Common myeloid progenitor, CD34-positive (primary cell): ENCODE measurements at regions of chr1 and their contacts with region 1.

Region 1: DNA sequence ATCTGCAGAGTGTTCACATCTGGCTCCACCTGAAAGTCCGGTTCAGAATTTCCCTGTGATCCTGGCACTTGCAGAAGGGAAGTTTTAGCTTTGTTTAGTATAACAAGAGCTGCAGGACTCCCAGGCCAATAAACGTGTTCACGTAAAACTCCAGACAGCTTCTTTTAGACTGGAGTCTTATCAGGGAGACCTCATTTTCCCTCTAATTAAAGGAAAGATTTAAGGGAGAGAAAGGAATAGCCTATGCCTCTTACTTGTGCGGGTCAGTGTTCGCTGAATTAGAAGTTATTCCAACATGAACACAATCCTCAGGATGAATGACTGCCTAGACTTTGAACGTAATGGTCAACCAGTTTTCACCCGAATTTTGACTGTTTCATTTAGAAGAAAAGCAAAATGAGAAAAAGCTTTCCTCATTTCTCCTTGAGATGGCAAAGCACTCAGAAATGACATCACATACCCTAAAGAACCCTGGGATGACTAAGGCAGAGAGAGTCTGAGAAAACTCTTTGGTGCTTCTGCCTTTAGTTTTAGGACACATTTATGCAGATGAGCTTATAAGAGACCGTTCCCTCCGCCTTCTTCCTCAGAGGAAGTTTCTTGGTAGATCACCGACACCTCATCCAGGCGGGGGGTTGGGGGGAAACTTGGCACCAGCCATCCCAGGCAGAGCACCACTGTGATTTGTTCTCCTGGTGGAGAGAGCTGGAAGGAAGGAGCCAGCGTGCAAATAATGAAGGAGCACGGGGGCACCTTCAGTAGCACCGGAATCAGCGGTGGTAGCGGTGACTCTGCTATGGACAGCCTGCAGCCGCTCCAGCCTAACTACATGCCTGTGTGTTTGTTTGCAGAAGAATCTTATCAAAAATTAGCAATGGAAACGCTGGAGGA is 202.1 kb upstream of the SGIP1 start:
- DNase-seq: peak; percentile 50 to 76 (median 73)
- H3K4me3 ChIP-seq: peak overlapping the region; percentile 33 to 100 (median 82)
- H3K27ac ChIP-seq: peak overlapping the region; percentile 72 to 74
- H3K4me1 ChIP-seq: peaks cover 55 to 95% (median 74%) of the 10 kb centered on the region in 4 experiments
- H3K27me3 ChIP-seq: no peaks in the 10 kb centered on the region

Region 2: DNA sequence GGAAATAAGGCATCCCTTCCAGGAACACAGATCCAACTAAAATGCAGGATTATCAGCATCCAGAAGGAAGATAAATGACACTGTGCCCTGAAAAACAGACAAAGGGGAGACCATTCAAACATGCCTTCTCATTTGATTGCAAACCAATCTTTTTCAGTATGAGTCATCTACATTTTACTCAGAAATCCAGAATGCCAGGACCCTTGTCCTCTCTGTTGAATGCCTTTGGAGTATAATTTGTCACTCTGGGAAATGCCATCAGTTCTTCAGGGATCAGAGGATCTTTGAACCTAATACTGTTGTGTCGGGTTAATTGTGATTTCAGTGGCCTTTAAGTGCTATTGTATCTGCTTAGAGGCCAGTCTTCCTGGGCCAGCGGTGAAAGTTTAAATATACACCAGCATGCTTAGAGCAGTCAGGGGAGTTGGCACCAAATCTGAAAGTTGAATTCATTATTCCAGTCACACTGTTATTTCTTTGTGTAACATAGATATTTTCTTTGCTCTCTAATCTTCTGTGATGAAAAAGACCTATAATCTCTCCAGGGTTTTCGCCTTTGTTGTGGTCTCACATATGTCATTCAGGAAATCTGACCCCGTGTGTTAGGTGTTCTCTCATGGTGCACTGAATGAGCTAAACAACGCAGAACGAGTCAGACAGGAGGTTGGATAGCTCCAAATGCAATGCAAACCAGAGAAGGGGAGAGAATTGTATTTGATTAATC is 162.8 kb before region 1 on chr1:
- CTCF ChIA-PET with region 1: no interaction called
- POLR2A ChIA-PET with region 1: no interaction called
- DNase-seq: no peak
- H3K4me3 ChIP-seq: no peak overlapping the region
- H3K27ac ChIP-seq: no peak overlapping the region
- H3K4me1 ChIP-seq: no peaks in the 10 kb centered on the region
- H3K27me3 ChIP-seq: no peaks in the 10 kb centered on the region

Region 3: GRCh38 chr1:66242646-66243547 is 89.0 kb before region 1 on chr1:
- CTCF ChIA-PET with region 1: interaction called, 10 read pairs
- POLR2A ChIA-PET with region 1: no interaction called
- DNase-seq: peak; percentile 82 to 87 (median 83)
- H3K4me3 ChIP-seq: no peak overlapping the region
- H3K27ac ChIP-seq: no peak overlapping the region
- H3K4me1 ChIP-seq: peaks cover 3 to 7% (median 6%) of the 10 kb centered on the region in 4 experiments
- H3K27me3 ChIP-seq: no peaks in the 10 kb centered on the region

Region 4: GRCh38 chr1:66253330-66253921 is 78.5 kb before region 1 on chr1:
- CTCF ChIA-PET with region 1: interaction called, 10 read pairs
- POLR2A ChIA-PET with region 1: no interaction called
- DNase-seq: peak; percentile 65 to 73 (median 69)
- H3K4me3 ChIP-seq: no peak overlapping the region
- H3K27ac ChIP-seq: no peak overlapping the region
- H3K4me1 ChIP-seq: peaks cover 0 to 26% (median 14%) of the 10 kb centered on the region in 4 experiments
- H3K27me3 ChIP-seq: no peaks in the 10 kb centered on the region

Region 5: GRCh38 chr1:66276218-66276617 is 55.7 kb before region 1 on chr1:
- CTCF ChIA-PET with region 1: interaction called, 12 read pairs
- POLR2A ChIA-PET with region 1: no interaction called
- DNase-seq: peak; percentile 31 to 81 (median 73)
- H3K4me3 ChIP-seq: peak overlapping the region in 4 of 7 experiments; percentile 2 to 56 (median 34)
- H3K27ac ChIP-seq: no peak overlapping the region
- H3K4me1 ChIP-seq: peaks cover 30 to 67% (median 44%) of the 10 kb centered on the region in 4 experiments
- H3K27me3 ChIP-seq: no peaks in the 10 kb centered on the region

Region 6: DNA sequence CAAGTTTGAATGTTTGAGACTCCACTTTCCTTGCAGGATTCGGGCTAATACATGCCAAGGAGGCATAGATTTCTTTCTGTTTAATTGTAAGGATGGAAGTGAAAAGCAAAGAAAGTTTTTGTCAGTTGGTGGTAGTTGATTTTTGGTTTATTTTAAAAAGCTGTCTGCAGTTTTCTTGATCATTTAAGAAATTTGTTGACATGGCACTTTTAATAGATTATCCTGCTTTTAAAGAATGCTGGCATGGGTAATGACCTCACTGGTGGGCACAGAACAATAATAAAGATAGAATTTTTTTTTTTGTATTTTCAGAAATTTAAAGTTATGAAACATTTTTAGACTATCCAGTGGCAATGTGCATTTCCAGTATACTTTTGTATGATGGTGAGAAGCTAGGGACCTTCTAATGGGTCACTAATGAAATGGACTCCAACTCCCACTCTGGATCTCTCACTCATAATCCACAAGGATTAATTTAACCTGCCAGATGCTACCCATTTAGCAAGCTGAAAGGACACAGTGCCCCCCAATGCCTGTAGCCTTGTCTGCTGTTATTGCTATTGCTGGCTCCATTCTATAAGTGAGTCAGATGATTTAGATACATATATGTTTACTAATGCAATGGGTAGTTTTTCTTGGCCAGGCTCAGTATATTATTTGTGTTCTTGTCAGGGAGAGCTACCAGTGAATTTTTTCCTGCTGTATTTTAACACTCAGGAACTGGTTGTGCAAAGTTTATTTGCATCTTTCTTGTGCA is 11.8 kb after region 1 on chr1:
- CTCF ChIA-PET with region 1: interaction called, 11 read pairs
- POLR2A ChIA-PET with region 1: no interaction called
- DNase-seq: no peak
- H3K4me3 ChIP-seq: no peak overlapping the region
- H3K27ac ChIP-seq: no peak overlapping the region
- H3K4me1 ChIP-seq: peaks cover 15 to 26% (median 22%) of the 10 kb centered on the region in 4 experiments
- H3K27me3 ChIP-seq: no peaks in the 10 kb centered on the region

Region 7: GRCh38 chr1:66350001-66350547 is 18.2 kb after region 1 on chr1:
- CTCF ChIA-PET with region 1: interaction called, 21 read pairs
- POLR2A ChIA-PET with region 1: interaction called, 10 read pairs
- DNase-seq: peak; percentile 60 to 93 (median 87)
- H3K4me3 ChIP-seq: peak overlapping the region in 3 of 7 experiments; percentile 2 to 51 (median 15)
- H3K27ac ChIP-seq: peak overlapping the region; percentile 37 to 80
- H3K4me1 ChIP-seq: peaks cover 43 to 54% (median 48%) of the 10 kb centered on the region in 4 experiments
- H3K27me3 ChIP-seq: no peaks in the 10 kb centered on the region